Common myeloid progenitor, CD34-positive (primary cell): ENCODE measurements at regions of chr17 and their contacts with region 1.

Region 1: DNA sequence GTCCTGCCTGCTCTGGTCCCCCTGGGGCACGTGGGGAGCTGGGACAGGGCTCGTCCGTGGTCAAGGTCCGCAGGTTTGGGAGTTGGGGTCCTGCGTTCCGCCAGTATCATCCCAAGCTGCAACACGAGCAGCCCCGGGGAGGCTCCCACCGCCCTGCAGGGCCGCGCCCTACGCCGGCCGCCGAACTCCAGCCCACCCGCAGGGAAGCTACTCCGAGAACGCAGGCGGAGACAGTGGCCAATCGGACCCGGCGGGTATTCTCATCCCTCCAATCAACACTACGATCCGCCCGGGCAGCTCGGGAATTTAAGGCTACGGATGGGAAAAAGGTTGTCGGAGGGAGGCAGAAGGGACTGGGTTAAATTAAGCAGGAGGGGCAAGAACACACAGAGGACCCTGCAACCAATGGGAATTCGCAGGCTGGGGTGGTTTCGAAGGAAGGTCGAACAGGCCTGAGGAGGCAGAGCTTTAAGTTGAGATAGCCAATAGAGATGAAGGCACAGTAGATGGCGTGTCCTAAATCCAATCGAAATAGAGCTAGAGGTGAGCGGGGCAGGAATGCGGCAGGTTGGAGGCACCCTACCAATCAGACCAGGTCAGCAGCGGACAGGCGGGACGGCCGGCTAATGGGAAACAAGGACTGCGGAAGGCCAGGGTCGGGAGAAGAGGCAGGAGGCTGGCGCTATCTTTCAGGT is 626 bp downstream of the SPAG7 start:
- DNase-seq: peak; percentile 100
- H3K4me3 ChIP-seq: peak overlapping the region; percentile 80 to 94 (median 89)
- H3K27ac ChIP-seq: peak overlapping the region; percentile 81 to 88
- H3K4me1 ChIP-seq: peaks cover 6 to 28% (median 21%) of the 10 kb centered on the region in 4 experiments
- H3K27me3 ChIP-seq: no peaks in the 10 kb centered on the region

Region 2: DNA sequence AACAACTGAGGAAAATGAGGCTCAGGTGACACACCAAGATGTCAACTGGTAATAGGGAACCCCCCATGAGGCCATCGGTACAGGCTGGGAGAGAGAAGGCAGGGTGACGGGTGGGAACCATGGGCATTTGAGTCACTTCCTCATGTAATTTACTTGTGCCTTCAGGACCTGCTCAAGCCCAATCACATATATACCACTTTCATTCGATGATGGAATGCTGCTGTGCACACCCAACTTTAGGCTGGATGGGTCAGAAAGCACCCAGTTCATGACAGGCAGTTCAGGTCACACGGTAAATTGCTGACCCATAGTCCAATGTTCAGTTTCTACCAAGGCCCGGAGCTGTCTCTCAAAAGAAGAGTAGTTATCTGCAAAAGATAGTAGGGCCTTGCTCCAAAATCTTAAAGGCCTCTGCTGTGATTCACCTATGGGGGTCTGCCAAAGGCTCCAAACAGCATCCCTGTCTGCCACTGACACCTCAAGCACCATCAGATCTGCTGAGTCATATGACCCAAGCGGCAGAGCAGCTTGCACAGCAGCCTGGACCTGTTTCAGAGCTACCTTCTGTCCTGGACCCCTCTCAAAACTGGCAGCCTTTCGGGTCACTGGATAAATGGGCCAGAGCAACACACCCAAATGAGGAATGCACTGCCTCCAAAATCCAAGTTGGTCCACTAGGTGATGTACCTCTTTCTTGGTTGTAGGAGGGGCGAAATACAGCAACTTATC is 848.8 kb before region 1 on chr17:
- CTCF ChIA-PET with region 1: no interaction called
- POLR2A ChIA-PET with region 1: no interaction called
- DNase-seq: no peak
- H3K4me3 ChIP-seq: no peak overlapping the region
- H3K27ac ChIP-seq: no peak overlapping the region
- H3K4me1 ChIP-seq: no peaks in the 10 kb centered on the region
- H3K27me3 ChIP-seq: no peaks in the 10 kb centered on the region

Region 3: DNA sequence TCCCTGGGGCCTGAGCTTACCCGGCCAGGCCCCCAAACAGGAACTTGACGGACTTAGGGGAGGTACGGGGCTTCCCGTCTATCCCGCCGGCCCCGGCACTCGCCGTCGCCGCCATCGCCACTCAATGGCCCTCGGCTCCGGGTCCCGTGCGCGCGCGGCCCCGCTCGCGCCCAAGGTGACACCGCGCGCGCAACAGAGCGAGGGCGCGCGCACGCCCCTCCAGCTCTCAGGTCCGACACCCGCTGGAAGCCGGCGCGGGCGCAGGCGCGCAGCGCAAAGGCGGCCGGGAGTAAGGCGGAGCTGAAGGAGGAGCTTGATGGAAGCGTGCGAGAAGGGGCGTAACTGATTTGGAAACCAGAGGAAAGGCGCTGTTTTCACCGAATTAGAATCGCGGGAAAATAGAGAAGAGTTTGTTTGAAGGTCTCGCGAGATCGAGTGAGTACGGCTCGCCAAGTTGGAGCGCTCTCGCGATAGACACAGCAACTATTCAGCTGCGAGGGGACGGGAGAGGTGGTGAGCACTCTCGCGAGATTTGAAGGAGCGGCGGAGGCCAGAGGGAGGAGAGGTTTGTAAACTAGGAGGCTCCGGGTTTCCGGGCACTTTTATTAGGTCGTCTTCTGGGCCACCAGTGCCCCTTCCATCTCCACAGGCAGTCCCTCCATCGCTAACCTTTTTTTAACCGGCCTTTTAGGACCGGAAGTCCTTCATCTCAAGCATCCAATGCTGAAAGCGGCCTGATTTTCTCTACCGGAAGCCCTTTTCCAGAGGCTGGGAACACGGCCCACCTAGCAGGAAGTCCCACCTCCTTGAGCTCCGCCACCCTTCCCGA is 27.0 kb before region 1 on chr17 and contains the starts of genes RNF167 and SLC25A11:
- CTCF ChIA-PET with region 1: interaction called, 6 read pairs
- POLR2A ChIA-PET with region 1: interaction called, 13 read pairs
- DNase-seq: peak; percentile 100
- H3K4me3 ChIP-seq: peak within 1 kb of the TSS; percentile 75 to 97 (median 94)
- H3K27ac ChIP-seq: peak within 1 kb of the TSS; percentile 87 to 96
- H3K4me1 ChIP-seq: peaks cover 18 to 89% (median 63%) of the 10 kb centered on the region in 4 experiments
- H3K27me3 ChIP-seq: no peaks in the 10 kb centered on the region

Region 4: DNA sequence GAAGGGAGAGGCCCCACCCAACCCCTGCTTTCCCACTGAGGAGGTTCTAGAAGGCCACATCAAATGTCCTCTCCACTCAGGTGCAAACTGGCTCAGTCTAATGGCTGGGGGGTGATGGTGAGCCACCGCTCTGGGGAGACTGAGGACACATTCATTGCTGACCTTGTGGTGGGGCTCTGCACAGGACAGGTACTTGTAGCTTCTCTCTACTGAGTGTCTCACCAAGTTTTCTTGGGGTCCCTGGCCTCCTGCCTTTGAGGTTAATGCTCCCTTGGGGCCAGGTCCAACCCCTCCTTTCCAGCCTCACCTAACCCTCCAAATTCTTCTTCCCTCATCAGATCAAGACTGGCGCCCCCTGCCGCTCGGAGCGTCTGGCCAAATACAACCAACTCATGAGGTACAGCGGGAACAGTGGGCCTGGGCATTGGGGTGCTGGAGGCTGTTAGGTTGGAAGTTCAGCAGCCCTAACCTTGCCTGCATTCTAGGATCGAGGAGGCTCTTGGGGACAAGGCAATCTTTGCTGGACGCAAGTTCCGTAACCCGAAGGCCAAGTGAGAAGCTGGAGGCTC is 10.4 kb before region 1 on chr17:
- CTCF ChIA-PET with region 1: interaction called, 69 read pairs
- POLR2A ChIA-PET with region 1: no interaction called
- DNase-seq: peak in 2 of 3 donors; percentile 54 to 57
- H3K4me3 ChIP-seq: no peak overlapping the region
- H3K27ac ChIP-seq: no peak overlapping the region
- H3K4me1 ChIP-seq: peaks cover 0 to 4% (median 0%) of the 10 kb centered on the region in 4 experiments
- H3K27me3 ChIP-seq: no peaks in the 10 kb centered on the region

Region 5: DNA sequence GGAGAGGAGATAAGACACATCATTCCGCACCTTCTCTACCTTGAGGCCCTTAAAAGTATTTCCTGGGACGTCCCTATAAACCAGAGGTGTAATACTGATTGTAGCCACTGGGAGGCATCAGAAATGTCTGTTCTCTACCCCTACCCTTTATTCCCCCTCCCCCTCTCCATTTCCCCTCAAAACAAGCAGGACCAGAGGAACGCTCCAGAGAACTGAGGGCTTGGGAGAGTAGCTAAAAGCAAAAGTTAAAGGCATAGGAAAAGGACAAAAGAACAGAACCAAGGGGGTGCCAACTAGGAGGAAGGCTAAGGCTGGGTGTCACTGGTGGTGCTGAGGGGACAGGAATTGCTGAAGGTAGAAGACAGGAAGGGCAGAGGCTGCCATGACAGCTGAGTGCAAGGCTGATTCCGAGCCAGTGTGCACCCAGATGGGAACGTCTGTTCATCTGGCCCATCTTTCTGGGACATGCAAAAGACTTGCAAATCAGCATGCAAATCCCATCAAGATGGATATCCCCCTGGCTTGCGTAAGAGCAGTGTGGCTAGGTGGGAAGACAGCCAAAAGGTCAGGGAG is 13.7 kb after region 1 on chr17:
- CTCF ChIA-PET with region 1: interaction called, 10 read pairs
- POLR2A ChIA-PET with region 1: no interaction called
- DNase-seq: peak; percentile 62 to 81 (median 75)
- H3K4me3 ChIP-seq: peak overlapping the region in 1 of 7 experiments; percentile 16
- H3K27ac ChIP-seq: no peak overlapping the region
- H3K4me1 ChIP-seq: peaks cover 14 to 33% (median 29%) of the 10 kb centered on the region in 4 experiments
- H3K27me3 ChIP-seq: no peaks in the 10 kb centered on the region

Region 6: GRCh38 chr17:4986951-4987766 is 20.2 kb after region 1 on chr17 and contains the start of gene CAMTA2:
- CTCF ChIA-PET with region 1: interaction called, 35 read pairs
- POLR2A ChIA-PET with region 1: no interaction called
- DNase-seq: peak; percentile 80 to 85 (median 81)
- H3K4me3 ChIP-seq: peak within 1 kb of the TSS; percentile 74 to 94 (median 80)
- H3K27ac ChIP-seq: peak within 1 kb of the TSS; percentile 58 to 79
- H3K4me1 ChIP-seq: peaks cover 8 to 26% (median 24%) of the 10 kb centered on the region in 4 experiments
- H3K27me3 ChIP-seq: no peaks in the 10 kb centered on the region

Region 7: DNA sequence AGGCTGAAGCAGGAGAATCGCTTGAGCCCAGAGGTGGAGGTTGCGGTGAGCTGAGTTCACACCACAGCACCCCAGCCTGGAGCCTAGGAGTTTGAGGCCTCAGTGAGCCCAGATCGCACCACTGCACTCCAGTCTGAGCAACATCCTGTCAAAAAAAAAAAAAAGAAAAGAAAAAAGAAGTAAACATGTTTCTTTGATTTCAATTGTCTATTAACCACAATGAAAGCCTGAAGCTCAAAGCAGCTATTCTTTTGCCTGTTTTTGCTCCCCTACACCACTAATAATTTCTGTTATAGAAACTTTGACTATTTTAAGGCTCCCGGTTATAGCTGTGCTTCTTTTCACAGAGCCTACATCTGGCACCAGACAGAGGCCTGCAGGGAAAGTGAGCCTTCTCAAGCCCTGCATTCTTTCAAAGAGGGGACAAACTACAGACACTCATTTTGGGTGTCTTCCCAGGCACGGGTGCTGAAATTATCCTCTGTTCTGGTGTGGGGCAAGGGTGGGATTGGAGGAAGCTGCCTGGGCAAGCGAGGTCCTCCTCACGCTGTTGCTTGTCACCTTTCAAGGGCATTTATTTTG is 82.4 kb after region 1 on chr17:
- CTCF ChIA-PET with region 1: no interaction called
- POLR2A ChIA-PET with region 1: no interaction called
- DNase-seq: no peak
- H3K4me3 ChIP-seq: no peak overlapping the region
- H3K27ac ChIP-seq: no peak overlapping the region
- H3K4me1 ChIP-seq: no peaks in the 10 kb centered on the region
- H3K27me3 ChIP-seq: peaks cover 0 to 4% (median 0%) of the 10 kb centered on the region in 5 experiments